ENCODE measurements at regions of chr3 and their contacts with region 1.

Region 1: GRCh38 chr3:159616212-159616825 is 372.3 kb upstream of the IL12A start:
- DNase-seq: no peak
- ATAC-seq: peak; percentile 60

Region 2: GRCh38 chr3:159645874-159646273 is 29.6 kb after region 1 on chr3:
- intact Hi-C with region 1: no loop called
- DNase-seq: no peak
- ATAC-seq: no peak

Region 3: DNA sequence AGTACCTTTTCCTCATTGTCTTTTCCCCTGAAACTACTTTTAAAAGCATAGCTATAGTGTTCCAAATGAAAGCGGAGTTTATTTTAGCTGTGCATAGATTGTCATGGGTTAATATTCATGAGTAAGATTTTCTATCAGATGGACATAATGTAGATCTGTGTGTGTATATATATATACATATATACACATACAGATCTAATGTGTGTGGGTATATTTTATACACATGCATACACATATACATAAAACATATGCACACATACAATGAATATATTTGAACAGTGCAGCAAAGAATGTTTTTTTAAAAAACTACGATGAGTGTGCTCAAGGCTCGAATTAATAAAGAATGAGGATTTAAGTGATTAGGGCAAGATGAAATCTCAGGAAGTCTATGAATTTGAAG is 44.0 kb after region 1 on chr3:
- intact Hi-C with region 1: no loop called
- DNase-seq: no peak
- ATAC-seq: no peak

Region 4: GRCh38 chr3:159672728-159673688 is 56.7 kb after region 1 on chr3:
- intact Hi-C with region 1: loop called (anchors 5 kb)
- DNase-seq: no peak
- ATAC-seq: no peak

Region 5: GRCh38 chr3:159685801-159686200 is 69.5 kb after region 1 on chr3:
- intact Hi-C with region 1: no loop called
- DNase-seq: no peak
- ATAC-seq: no peak

Region 6: DNA sequence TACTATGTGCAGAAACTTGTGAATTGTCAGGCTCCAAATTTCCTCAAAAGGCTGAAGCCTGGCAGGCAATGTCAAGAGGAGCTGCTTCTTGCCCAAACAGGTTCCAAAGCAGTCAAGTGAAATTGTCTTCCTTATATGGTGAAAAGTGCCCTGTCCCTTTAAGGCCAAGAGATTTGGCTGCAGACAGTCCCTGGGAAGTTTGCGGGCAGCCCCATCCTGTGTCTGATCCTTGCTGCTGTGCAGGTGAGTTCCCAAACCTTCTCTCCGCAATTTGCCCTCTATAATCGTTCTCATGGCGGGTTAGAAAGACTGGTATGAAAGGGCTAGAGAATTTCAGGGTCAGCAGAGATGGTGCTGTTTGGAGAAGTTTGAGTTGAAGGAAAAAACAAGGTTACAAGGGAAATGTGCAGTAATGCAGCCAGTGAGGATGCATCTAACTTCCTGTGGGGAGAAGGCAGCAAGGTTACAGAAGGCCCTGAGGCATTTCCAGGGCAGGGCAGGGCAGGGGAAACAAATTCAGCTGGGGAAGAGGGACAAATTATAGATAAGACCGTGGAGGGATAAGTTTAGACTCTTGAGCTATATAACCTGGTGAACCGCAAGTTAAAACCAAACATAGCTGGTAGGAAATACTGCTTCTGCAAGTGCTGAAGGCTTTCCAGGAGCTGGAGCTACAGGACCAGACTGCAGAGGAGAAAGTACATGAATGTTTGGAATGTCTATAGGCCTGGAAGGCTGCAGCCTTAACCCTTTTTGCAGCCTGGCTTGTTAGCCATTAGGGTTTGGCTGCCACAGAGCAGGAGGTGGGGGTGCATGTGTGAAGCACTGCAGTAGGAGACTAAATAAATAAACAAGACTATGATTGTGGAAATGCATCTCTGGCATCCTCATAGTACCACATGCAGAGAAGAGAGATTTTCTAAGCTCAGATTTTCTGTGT is 116.1 kb after region 1 on chr3:
- intact Hi-C with region 1: loop called (anchors 10 kb)
- DNase-seq: no peak
- ATAC-seq: peak; percentile 65

Region 7: GRCh38 chr3:159763602-159764489 is 147.5 kb after region 1 on chr3:
- intact Hi-C with region 1: loop called (anchors 5 kb)
- DNase-seq: peak; percentile 87
- ATAC-seq: peak; percentile 84

Region 8: GRCh38 chr3:159804726-159805410 is 188.5 kb after region 1 on chr3:
- intact Hi-C with region 1: loop called (anchors 1 kb)
- DNase-seq: no peak
- ATAC-seq: peak; percentile 93

Measured in Right ventricle myocardium inferior (tissue), 1 donor.